Mammary epithelial cell (primary cell): ENCODE measurements at regions of chr10 and their contacts with region 1.

Region 1: DNA sequence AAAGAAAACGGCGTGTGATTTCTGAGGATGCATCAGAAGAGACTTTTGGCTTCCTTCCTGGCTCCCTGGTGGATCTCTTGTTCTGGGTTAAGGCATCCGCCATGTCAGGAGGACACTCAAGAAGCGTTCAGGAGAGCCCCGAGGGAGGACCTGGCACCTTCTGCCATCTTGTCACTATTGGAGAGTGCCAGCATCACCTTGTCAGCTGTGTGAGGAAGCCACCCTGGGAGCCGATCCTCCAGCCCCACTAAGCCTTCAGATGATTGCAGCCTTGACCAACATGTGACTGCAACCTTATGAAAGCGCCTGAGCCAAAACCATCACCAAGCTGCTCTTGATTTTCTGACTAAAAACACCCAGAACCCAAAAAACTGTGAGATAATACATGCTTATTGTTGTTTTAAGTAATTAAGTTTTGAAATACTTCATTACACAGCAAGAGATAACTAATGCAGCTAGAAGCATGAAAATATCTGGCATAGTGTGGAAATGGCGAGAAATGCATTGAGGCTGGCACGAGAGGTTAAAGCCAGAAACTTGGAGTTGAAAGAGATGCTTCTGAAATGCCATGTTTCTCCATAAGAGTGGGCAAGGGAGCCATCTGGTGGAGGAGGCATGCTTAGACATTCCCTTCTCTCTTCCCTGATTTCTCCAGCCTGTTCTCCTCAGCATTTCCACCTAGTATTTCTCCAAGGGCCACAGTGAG is 5.4 kb upstream of the ZFYVE27 start:
- DNase-seq: peak; percentile 64
- H3K4me3 ChIP-seq: no peak overlapping the region
- H3K27ac ChIP-seq: no peak overlapping the region
- H3K4me1 ChIP-seq: peaks cover 13% of the 10 kb centered on the region
- H3K27me3 ChIP-seq: no peaks in the 10 kb centered on the region
- CTCF ChIP-seq: peak; percentile 87 to 93

Region 2: GRCh38 chr10:97096261-97097083 is 635.0 kb before region 1 on chr10:
- CTCF ChIA-PET with region 1: no interaction called
- dilution Hi-C with region 1: no loop called
- in situ Hi-C with region 1: no loop called
- intact Hi-C with region 1: no loop called
- DNase-seq: no peak
- H3K4me3 ChIP-seq: no peak overlapping the region
- H3K27ac ChIP-seq: no peak overlapping the region
- H3K4me1 ChIP-seq: no peaks in the 10 kb centered on the region
- H3K27me3 ChIP-seq: peaks cover 10% of the 10 kb centered on the region
- CTCF ChIP-seq: no peak

Region 3: DNA sequence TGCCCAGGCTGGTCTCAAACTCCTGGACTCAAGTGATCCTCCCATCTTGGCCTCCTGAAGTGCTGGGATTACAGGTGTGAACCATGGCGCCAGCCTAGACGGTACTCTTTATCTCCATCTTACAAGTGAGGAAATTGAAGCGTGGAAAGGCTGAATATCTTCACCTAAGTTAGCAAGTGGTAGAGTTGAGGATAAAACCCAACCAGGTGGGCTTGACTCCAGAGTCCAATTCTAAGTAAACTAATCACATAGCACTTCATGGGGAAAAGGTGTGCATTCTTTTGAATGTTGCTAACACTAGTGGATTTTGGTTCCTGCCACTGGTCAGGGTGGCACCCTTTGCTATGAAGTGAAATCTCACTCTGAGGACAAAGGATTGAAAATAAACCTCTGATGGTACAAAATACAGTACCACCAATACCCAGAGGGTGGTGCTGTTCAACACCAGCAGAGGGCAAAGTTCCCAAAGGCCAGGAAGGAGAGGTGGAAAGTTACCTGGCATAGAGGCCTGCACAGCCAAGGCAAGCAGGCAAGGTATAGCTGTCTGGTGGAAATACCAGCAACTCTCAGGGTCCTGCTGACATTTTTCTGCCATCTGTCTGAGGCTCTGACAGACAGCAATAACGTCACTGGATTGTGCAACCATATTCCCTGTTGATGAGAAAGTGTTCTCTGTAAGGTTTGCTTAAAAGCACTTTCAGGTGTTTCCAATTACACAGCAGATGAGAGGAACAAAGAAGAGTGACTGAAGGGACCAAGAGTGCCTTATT is 268.0 kb before region 1 on chr10:
- CTCF ChIA-PET with region 1: no interaction called
- dilution Hi-C with region 1: no loop called
- in situ Hi-C with region 1: no loop called
- intact Hi-C with region 1: loop called (anchors 5 kb)
- DNase-seq: peak; percentile 65
- H3K4me3 ChIP-seq: no peak overlapping the region
- H3K27ac ChIP-seq: no peak overlapping the region
- H3K4me1 ChIP-seq: peaks cover 26% of the 10 kb centered on the region
- H3K27me3 ChIP-seq: no peaks in the 10 kb centered on the region
- CTCF ChIP-seq: peak; percentile 90 to 91

Region 4: GRCh38 chr10:97664282-97664850 is 67.1 kb before region 1 on chr10:
- CTCF ChIA-PET with region 1: no interaction called
- dilution Hi-C with region 1: loop called (anchors 10 kb)
- in situ Hi-C with region 1: no loop called
- intact Hi-C with region 1: no loop called
- DNase-seq: no peak
- H3K4me3 ChIP-seq: no peak overlapping the region
- H3K27ac ChIP-seq: no peak overlapping the region
- H3K4me1 ChIP-seq: no peaks in the 10 kb centered on the region
- H3K27me3 ChIP-seq: no peaks in the 10 kb centered on the region
- CTCF ChIP-seq: no peak

Region 5: GRCh38 chr10:97686962-97687784 is 44.3 kb before region 1 on chr10 and contains the start of gene AVPI1:
- CTCF ChIA-PET with region 1: interaction called, 3 read pairs
- dilution Hi-C with region 1: loop called (anchors 5 kb)
- in situ Hi-C with region 1: no loop called
- intact Hi-C with region 1: loop called (anchors 2 kb)
- DNase-seq: peak; percentile 99
- H3K4me3 ChIP-seq: peak within 1 kb of the TSS; percentile 88 to 95 (median 89)
- H3K27ac ChIP-seq: peak within 1 kb of the TSS; percentile 100
- H3K4me1 ChIP-seq: peaks cover 56% of the 10 kb centered on the region
- H3K27me3 ChIP-seq: no peaks in the 10 kb centered on the region
- CTCF ChIP-seq: no peak
- total RNA-seq, gene AVPI1: 31.4 to 33.8 TPM

Region 6: DNA sequence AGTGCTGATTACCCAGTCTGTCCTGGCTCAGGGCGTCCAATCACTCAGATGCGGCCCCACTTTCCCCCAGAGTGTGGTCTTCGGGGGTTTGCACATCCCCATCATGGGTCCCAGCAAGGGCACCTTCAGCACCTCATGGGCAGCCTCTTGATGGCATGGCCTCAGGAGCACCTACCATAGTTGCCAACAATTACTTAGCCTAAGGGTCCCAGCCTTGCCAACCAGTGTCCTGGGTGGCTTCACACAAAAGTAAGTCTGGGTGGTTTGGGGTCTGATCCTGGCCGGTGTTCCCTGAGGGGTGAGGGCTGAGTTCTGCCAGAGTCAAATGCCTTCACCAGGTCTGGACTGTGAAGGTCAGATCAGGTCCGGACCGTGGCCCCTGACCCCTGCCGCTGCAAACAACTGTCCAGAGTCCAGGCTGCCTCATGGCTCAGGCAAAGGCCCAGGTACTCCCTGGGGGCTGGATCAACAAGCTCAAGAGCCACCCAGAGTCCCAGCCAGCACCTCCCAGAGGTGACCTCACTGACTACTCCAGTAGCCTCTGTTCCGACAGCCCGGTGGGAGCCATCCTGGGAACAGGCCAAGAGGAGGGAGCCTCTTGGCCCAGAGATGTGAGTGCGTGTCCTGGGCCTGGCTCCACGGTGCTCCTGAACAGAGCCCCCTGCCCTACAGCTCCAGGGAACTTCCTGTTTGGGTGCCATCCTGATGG is 24.2 kb before region 1 on chr10:
- CTCF ChIA-PET with region 1: interaction called, 15 read pairs
- dilution Hi-C with region 1: no loop called
- in situ Hi-C with region 1: no loop called
- intact Hi-C with region 1: loop called (anchors 1 kb)
- DNase-seq: no peak
- H3K4me3 ChIP-seq: no peak overlapping the region
- H3K27ac ChIP-seq: no peak overlapping the region
- H3K4me1 ChIP-seq: no peaks in the 10 kb centered on the region
- H3K27me3 ChIP-seq: no peaks in the 10 kb centered on the region
- CTCF ChIP-seq: no peak